HCT116 (cell line): ENCODE measurements at regions of chr18 and their contacts with region 1.

Region 1: DNA sequence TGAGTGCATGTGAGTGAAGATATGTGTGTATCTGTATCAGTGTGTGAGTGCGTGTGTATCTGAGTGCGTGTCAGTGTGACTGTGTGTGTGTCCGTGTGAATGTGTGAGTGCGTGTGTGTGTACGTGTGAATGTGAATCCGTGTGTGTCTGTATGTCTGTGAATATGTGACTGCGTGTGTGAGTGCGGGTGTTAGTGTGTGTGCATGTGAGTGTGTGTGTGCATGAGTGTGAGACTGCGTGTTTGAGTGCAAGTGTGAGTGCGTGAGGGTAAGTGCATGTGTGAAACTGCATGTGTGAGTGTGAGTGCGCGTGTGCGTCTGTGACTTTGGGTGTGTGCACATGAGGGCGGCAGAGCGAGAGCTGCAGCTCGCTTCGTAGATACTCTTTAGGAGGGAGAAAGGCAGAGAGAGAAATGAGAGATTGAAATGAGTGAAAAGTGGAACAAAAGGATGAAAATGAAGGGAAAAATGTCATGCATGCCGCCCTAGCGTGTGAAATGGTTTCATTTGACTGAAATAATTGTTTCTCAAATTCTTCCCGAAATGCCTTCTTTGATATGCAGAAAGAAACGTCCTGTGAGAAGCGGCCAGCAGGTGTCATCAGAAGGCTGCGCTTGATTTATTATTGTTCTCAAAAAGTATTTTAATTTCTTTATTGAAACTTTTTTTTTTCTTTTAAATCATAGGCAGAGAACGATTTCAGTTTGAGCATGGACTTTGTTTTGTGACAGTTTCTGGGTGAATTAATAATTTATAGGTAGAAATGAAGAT is 25.6 kb downstream of the ZNF407 start:
- DNase-seq: peak; percentile 10
- ATAC-seq: no peak; the same call in 1 of the 2 replicates
- H3K4me3 ChIP-seq: no peak overlapping the region
- H3K27ac ChIP-seq: no peak overlapping the region
- H3K4me1 ChIP-seq: no peaks in the 10 kb centered on the region
- H3K27me3 ChIP-seq: no peaks in the 10 kb centered on the region
- CTCF ChIP-seq: peak in 2 of 3 experiments; percentile 36 to 56; a peak in 4 of 6 replicates
- POLR2A ChIP-seq: no peak
- RAD21 ChIP-seq: peak; percentile 55

Region 2: GRCh38 chr18:74722237-74722636 is 99.0 kb after region 1 on chr18:
- CTCF ChIA-PET with region 1: no interaction called
- POLR2A ChIA-PET with region 1: no interaction called
- RAD21 ChIA-PET with region 1: no interaction called
- intact Hi-C with region 1: no loop called
- DNase-seq: no peak
- ATAC-seq: no peak
- H3K4me3 ChIP-seq: no peak overlapping the region
- H3K27ac ChIP-seq: no peak overlapping the region
- H3K4me1 ChIP-seq: no peaks in the 10 kb centered on the region
- H3K27me3 ChIP-seq: no peaks in the 10 kb centered on the region
- CTCF ChIP-seq: no peak
- POLR2A ChIP-seq: no peak
- RAD21 ChIP-seq: no peak

Region 3: GRCh38 chr18:75727456-75727855 is 1104.2 kb after region 1 on chr18:
- CTCF ChIA-PET with region 1: no interaction called
- POLR2A ChIA-PET with region 1: no interaction called
- RAD21 ChIA-PET with region 1: no interaction called
- intact Hi-C with region 1: loop called (anchors 10 kb)
- DNase-seq: peak; percentile 21
- ATAC-seq: peak; percentile 84
- H3K4me3 ChIP-seq: no peak overlapping the region
- H3K27ac ChIP-seq: no peak overlapping the region
- H3K4me1 ChIP-seq: no peaks in the 10 kb centered on the region
- H3K27me3 ChIP-seq: no peaks in the 10 kb centered on the region
- CTCF ChIP-seq: peak; percentile 40 to 71 (median 67); a peak in 5 of 6 replicates
- POLR2A ChIP-seq: no peak
- RAD21 ChIP-seq: peak; percentile 63